Left ventricle myocardium inferior (tissue), 1 donor: ENCODE measurements at regions of chrX and their contacts with region 1.

Region 1: GRCh38 chrX:135572436-135572835 is 52.0 kb downstream of the INTS6L start:
- DNase-seq: no peak
- H3K4me3 ChIP-seq: no peak overlapping the region
- H3K27ac ChIP-seq: no peak overlapping the region
- H3K4me1 ChIP-seq: no peaks in the 10 kb centered on the region
- H3K27me3 ChIP-seq: no peaks in the 10 kb centered on the region
- CTCF ChIP-seq: peak; percentile 53

Region 2: DNA sequence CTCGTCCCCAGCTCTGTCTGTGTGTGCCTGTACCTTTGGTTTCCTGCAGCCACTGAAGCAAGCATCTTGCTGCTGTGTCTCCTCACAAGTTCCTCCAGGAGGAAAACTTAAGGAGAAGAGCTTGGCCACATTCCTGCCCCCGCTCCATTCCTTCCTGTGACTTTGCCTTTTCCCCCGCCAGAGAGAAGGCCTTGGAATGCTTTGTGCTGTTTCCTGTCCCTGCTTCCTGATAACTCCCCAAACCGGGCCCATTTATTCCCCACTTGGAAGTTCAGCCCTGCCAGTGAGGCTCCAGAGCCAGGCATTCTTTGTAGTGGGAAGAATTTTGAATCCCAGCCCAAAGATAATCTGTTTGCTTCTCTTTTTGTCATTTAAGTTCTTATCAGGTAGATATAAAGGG is 117.6 kb before region 1 on chrX:
- intact Hi-C with region 1: no loop called
- DNase-seq: no peak
- H3K4me3 ChIP-seq: no peak overlapping the region
- H3K27ac ChIP-seq: no peak overlapping the region
- H3K4me1 ChIP-seq: peaks cover 9% of the 10 kb centered on the region
- H3K27me3 ChIP-seq: no peaks in the 10 kb centered on the region
- CTCF ChIP-seq: no peak

Region 3: GRCh38 chrX:135484641-135485289 is 87.7 kb before region 1 on chrX:
- intact Hi-C with region 1: loop called (anchors 10 kb)
- DNase-seq: no peak
- H3K4me3 ChIP-seq: no peak overlapping the region
- H3K27ac ChIP-seq: no peak overlapping the region
- H3K4me1 ChIP-seq: no peaks in the 10 kb centered on the region
- H3K27me3 ChIP-seq: no peaks in the 10 kb centered on the region
- CTCF ChIP-seq: peak; percentile 67